Tibial artery (tissue), 4 donors: ENCODE measurements at regions of chr2 and their contacts with region 1.

Region 1: DNA sequence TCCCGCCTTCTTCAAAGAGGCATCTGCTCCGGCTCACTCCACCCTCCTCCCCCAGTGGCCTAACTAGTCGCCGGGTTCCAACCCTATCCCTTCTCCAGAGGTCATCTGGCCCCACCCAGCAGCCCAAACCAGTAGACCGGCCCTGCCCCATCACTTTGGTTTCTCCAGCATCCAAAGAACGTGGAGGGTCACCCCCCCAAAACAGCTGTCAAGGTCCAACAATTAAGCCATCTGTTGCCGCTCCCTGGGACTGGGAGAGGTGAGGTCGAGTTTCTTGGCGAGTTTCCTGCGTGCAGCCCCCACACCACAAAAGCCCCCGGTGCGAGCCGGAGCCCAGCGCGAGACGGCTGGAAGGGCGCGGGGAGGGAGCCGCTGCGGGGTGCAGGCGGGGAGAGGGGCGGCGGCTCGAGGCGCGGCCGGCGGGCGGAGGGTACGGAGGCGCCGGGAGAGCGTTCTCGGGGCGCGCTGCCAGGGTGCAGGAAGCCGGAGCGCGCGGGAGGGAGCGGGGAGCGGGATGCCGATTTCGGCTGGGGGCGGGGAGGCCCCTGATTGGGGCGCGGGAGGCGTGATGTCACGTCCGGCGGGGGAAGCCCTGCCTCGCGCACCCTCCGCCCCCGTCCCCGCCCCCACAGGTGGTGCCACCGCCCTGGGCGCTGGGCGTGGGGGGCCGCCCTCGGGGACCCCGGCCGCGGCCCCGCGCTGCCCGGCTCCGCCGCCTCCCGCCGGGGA is 571 bp upstream of the GPC1 start:
- DNase-seq: peak; percentile 89 to 97
- H3K4me3 ChIP-seq: peak overlapping the region; percentile 64 to 69
- H3K27ac ChIP-seq: peak overlapping the region; percentile 81 to 94
- H3K4me1 ChIP-seq: peaks cover 10 to 49% (median 42%) of the 10 kb centered on the region in 4 donors
- H3K27me3 ChIP-seq: no peaks in the 10 kb centered on the region
- CTCF ChIP-seq: no peak

Region 2: DNA sequence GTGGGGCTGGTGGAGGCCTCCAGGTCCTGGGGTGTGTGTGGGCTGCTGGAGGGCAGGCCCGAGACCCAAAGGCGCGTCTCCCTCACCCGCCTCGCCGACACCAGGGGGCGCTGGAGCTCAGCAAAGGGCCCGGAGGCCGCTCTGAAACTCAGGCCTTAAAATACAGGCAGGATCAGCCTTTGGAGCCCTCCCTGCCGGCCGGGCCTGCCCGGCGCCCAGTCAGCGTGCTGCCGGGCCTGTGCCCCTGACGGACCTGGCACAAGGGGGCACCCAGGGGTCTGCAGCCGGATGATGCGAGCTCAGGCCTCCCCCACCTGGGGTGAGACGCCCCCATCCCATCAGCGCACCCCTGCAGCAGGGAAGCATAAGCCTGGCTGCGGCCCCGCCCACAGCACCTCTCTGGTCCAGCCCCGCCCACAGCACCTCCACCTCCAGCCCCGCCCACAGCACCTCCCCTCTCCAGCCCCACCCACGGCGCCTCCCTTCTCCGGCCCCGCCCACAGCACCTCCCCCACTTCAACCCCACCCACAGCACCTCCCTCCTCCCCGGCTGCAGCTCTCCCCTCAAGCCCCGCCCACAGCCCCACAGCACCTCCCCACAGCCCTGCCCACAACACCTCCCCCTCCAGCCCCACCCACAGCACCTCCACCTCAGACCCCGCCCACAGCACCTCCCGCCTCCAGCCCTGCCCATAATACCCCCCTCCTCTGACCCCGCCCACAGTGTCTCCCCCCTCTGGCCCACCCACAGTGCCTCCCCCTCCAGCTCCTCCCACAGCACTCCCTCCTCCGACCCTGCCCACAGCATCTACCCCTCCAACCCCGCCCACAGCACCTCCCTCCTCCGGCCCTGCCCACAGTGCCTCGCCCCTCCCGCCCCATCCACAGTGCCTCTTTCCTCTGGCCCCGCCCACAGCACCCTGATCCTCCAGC is 201.7 kb before region 1 on chr2:
- intact Hi-C with region 1: loop called (anchors 2 kb)
- DNase-seq: peak; percentile 76 to 95
- H3K4me3 ChIP-seq: peak overlapping the region; percentile 33 to 51
- H3K27ac ChIP-seq: peak overlapping the region; percentile 65 to 72
- H3K4me1 ChIP-seq: peaks cover 0 to 54% (median 34%) of the 10 kb centered on the region in 4 donors
- H3K27me3 ChIP-seq: no peaks in the 10 kb centered on the region
- CTCF ChIP-seq: peak; percentile 90 to 98

Region 3: GRCh38 chr2:240374085-240374907 is 60.6 kb before region 1 on chr2:
- intact Hi-C with region 1: loop called (anchors 2 kb)
- DNase-seq: peak; percentile 51 to 89
- H3K4me3 ChIP-seq: no peak overlapping the region
- H3K27ac ChIP-seq: peak overlapping the region; percentile 76 to 81
- H3K4me1 ChIP-seq: peaks cover 8 to 53% (median 39%) of the 10 kb centered on the region in 4 donors
- H3K27me3 ChIP-seq: no peaks in the 10 kb centered on the region
- CTCF ChIP-seq: no peak

Region 4: DNA sequence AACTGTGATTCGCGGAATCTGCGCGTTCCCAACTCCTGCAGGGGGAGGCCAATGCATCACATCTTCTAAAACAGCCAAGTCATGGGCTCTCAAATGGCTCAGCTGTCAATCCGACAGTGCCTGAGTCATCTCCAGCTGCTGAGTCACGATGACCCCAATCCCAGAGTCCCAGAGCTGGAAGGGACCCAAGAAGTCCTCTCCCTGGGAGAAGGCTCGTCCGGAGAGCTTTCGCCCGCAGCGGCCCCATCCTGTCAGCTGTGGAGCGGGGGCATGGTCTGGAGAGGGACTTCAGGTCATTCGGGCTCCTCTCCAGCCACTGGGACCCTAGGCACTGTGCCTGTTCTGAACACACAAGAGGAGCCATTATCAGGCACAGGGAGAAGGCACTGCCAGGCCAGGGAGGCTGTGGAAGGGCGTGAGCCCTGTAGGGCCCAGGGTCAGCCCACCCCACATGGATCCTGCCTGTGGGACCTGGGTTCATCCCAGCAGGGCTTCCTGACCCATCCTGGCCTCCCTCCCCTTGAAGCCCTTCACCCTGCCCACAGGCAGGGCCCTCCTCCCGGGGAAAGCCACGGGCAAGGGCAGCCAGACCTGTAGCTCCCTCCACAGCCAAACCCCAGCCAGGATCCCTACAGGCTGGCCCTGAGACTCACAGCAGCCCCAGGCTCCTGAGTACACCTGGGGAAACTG is 47.1 kb before region 1 on chr2:
- intact Hi-C with region 1: loop called (anchors 5 kb)
- DNase-seq: peak; percentile 57 to 91
- H3K4me3 ChIP-seq: no peak overlapping the region
- H3K27ac ChIP-seq: peak overlapping the region; percentile 15 to 65
- H3K4me1 ChIP-seq: peaks cover 0 to 15% (median 10%) of the 10 kb centered on the region in 4 donors
- H3K27me3 ChIP-seq: no peaks in the 10 kb centered on the region
- CTCF ChIP-seq: no peak

Region 5: DNA sequence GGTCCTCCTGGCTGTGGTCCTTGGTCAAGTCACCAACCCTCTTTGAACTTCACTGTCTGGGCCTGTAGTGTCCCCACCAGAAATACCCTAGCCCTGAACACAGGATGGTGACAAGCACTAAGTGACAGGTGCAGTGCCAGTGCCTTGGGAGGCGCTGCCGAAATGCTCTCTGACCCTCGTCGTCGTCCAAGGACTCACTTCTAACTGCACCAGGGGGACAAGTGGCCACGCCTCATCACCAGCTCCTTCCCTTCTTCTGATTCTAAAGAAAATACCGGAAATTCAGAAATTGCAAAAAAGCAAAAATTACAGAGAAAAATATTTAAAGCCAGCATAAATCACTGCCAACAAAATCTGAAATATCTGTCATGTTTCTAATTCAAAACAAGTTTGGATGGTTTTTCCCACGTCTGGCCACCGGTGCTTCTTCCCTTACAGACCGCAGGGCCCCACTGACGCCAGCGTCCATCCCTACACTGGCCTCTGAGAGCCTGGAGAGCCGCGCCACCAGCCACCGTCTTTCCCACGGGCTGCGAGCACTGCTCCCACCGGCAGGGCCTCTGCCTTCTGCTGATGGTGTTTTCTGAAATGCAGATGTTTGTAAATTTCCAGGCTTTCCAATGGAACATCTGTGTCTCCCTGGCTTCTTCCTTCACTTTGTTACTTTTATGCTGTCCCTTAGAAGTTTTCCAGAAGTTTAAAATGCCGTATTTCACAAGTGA is 36.8 kb before region 1 on chr2:
- intact Hi-C with region 1: no loop called
- DNase-seq: peak; percentile 9 to 48
- H3K4me3 ChIP-seq: no peak overlapping the region
- H3K27ac ChIP-seq: no peak overlapping the region
- H3K4me1 ChIP-seq: no peaks in the 10 kb centered on the region
- H3K27me3 ChIP-seq: no peaks in the 10 kb centered on the region
- CTCF ChIP-seq: no peak

Region 6: GRCh38 chr2:240560480-240561326 is 125.8 kb after region 1 on chr2:
- intact Hi-C with region 1: loop called (anchors 10 kb)
- DNase-seq: peak; percentile 99 to 100
- H3K4me3 ChIP-seq: peak overlapping the region; percentile 93 to 96
- H3K27ac ChIP-seq: peak overlapping the region; percentile 99 to 100
- H3K4me1 ChIP-seq: peaks cover under 1 to 56% (median 39%) of the 10 kb centered on the region in 4 donors
- H3K27me3 ChIP-seq: peaks cover 0 to 8% of the 10 kb centered on the region in 2 donors
- CTCF ChIP-seq: peak; percentile 43 to 46